ENCODE measurements at regions of chr17 and their contacts with region 1.

Region 1: GRCh38 chr17:76072148-76072858 is at the start of gene SRP68:
- DNase-seq: peak; percentile 93 to 99 (median 98)

Region 2: DNA sequence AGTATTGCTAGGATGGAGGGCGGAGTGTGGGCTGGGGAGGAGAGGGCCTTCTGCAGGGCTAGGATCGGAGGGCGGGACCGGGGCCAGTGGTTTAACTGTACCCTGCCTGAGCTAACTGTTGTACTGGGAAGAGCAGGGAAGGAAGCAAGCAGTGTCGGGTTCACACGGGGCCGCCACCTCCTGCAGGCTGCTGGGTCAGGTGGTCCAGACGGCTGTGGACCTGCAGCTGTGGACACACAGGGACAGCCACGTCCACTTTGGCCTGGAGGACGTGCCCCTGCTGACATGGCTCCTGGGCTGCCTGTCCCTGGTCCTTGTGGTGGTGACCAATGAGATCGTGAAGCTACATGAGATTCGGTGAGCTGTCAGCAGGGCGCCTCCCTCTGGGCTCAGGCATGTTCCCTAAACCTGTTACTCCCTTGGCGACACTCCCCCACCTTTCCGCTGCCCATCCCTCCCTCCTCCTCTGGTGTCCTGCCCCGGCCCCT is 573.5 kb before region 1 on chr17:
- intact Hi-C with region 1: no loop called
- DNase-seq: peak in 1 of 42 donors; percentile 22

Region 3: DNA sequence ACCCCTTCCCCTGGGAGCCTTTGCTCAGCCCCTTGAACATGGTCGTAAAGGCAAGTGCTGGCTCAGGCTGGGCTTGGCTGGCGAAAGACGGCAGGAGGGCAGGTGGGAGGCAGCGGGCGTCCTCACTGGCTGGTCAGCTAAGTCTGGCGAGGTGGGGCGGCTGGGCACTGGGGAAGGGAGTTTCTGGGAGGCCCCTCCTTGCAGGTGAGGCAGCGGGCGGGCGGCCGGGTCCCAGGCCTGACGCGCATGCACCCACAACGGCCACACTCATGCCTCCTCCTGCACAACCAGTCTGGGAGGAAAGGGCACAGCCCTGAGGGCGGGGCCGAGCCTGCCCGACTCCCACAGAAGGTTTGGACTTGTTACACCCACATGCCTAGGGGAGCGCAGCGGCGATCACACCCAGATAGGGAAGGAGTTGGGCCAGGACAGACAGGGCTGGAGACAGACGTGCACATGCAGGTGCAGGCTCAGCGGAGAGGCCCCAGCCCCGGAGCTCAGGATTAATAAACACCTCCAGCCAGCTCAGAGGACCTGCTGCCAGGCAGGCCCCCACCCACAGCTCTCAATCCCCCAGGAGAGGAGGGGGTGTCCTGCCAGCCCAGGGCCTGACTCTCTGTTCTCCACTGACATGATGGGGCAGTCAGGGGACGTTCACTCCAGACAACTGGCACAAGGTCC is 45.0 kb before region 1 on chr17 and contains the start of gene EVPL:
- intact Hi-C with region 1: no loop called
- DNase-seq: no peak

Region 4: GRCh38 chr17:76103274-76104139 is 31.2 kb after region 1 on chr17 and contains the start of gene EXOC7:
- intact Hi-C with region 1: loop called (anchors 1 kb)
- DNase-seq: peak; percentile 84 to 98 (median 94)

Measured in head of caudate nucleus (tissue), 42 donors.